PC-3 (cell line): ENCODE measurements at regions of chr11 and their contacts with region 1.

Region 1: DNA sequence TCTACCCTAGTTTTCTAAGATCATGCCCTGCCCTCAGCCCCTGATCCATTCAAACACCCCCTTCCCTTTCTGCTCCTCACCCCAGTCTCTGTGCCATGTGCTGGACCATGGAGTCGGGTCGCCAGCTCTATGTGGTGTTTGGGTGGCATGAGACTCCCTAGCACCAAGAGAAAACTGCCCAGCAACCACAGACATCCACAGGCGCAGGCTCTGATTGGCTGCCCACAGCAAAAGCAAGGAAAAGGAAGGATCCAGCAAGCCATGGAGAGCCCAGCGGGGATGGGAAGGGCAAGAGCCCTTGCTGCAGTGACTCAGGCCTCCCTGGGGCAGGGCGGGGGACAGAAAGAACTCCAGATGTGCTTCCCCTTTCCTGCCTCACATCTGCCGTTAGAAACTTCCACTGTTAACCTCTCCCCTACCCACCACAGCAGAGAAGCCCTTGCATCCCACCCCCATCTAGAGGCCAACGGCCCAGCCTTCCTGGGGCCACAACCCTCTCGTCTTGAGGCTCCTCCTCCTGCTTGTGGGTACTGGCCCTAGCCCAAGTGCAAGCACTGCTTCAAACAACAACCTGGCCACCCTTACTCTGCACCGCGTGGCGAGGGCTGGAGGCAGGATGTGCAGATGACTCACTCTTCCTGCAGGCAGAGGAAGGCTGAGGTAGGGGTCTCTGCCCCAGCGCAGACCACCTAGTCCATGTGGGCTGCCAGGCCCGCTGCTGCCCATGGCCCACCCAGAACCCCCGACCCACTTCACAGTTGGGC is 9.7 kb upstream of the AHNAK start:
- DNase-seq: peak; percentile 98
- ATAC-seq: peak; percentile 39
- H3K4me3 ChIP-seq: peak overlapping the region; percentile 26; the same call in 1 of the 2 replicates
- H3K27ac ChIP-seq: peak overlapping the region; percentile 94
- H3K4me1 ChIP-seq: peaks cover 98% of the 10 kb centered on the region
- H3K27me3 ChIP-seq: no peaks in the 10 kb centered on the region
- CTCF ChIP-seq: no peak

Region 2: GRCh38 chr11:62394825-62395538 is 161.3 kb before region 1 on chr11:
- CTCF ChIA-PET with region 1: interaction called, 35 read pairs
- POLR2A ChIA-PET with region 1: interaction called, 5 read pairs
- intact Hi-C with region 1: loop called (anchors 1 kb)
- DNase-seq: peak; percentile 93
- ATAC-seq: peak; percentile 81
- H3K4me3 ChIP-seq: peak overlapping the region; percentile 64
- H3K27ac ChIP-seq: no peak overlapping the region
- H3K4me1 ChIP-seq: peaks cover 17% of the 10 kb centered on the region
- H3K27me3 ChIP-seq: no peaks in the 10 kb centered on the region
- CTCF ChIP-seq: peak; percentile 96

Region 3: DNA sequence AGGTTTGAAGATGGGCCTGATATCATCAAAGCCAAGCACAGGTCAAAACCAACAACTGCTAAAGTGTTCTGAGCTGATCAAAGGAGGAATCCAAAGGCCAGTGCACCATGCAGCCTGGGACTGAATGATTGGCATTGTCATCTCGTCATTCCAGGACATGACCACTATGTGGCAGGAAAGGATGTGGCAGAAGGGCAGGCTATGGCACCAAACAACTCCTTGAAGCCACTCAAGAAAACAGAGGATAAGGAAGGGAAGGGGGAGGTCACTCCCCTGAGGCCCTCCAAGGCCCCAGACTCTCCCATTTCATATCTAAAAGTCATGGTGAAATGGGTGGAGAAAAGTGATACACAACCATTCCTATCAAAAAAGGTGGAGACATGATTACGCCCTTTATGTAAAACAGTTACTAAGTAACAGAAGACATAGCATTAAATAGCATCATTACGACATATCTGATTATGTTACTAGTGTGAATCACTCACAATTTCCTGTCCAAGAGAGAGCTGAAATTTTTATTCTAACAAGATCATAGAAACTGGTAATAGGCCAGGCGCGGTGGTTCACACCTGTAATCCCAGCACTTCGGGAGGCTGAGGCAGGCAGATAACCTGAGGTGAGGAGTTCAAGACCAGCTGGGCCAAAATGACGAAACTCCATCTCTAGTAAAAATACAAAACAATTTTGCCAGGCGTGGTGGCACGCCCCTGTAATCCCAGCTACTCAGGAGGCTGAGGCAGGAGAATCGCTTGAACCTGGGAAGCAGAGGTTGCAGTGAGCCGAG is 59.0 kb before region 1 on chr11:
- CTCF ChIA-PET with region 1: interaction called, 9 read pairs
- POLR2A ChIA-PET with region 1: no interaction called
- intact Hi-C with region 1: loop called (anchors 1 kb)
- DNase-seq: peak; percentile 87
- ATAC-seq: peak; percentile 85
- H3K4me3 ChIP-seq: no peak overlapping the region
- H3K27ac ChIP-seq: peak overlapping the region; percentile 26
- H3K4me1 ChIP-seq: peaks cover 34% of the 10 kb centered on the region
- H3K27me3 ChIP-seq: no peaks in the 10 kb centered on the region
- CTCF ChIP-seq: peak; percentile 93

Region 4: GRCh38 chr11:62573592-62574362 is 17.5 kb after region 1 on chr11 and contains the start of gene EEF1G:
- CTCF ChIA-PET with region 1: interaction called, 6 read pairs
- POLR2A ChIA-PET with region 1: interaction called, 12 read pairs
- intact Hi-C with region 1: no loop called
- DNase-seq: peak; percentile 100
- ATAC-seq: peak; percentile 87
- H3K4me3 ChIP-seq: peak within 1 kb of the TSS; percentile 94
- H3K27ac ChIP-seq: peak within 1 kb of the TSS; percentile 74
- H3K4me1 ChIP-seq: peaks cover 36% of the 10 kb centered on the region
- H3K27me3 ChIP-seq: no peaks in the 10 kb centered on the region
- CTCF ChIP-seq: no peak
- total RNA-seq, gene EEF1G: 1,577 and 1,815 TPM in 2 replicates

Region 5: DNA sequence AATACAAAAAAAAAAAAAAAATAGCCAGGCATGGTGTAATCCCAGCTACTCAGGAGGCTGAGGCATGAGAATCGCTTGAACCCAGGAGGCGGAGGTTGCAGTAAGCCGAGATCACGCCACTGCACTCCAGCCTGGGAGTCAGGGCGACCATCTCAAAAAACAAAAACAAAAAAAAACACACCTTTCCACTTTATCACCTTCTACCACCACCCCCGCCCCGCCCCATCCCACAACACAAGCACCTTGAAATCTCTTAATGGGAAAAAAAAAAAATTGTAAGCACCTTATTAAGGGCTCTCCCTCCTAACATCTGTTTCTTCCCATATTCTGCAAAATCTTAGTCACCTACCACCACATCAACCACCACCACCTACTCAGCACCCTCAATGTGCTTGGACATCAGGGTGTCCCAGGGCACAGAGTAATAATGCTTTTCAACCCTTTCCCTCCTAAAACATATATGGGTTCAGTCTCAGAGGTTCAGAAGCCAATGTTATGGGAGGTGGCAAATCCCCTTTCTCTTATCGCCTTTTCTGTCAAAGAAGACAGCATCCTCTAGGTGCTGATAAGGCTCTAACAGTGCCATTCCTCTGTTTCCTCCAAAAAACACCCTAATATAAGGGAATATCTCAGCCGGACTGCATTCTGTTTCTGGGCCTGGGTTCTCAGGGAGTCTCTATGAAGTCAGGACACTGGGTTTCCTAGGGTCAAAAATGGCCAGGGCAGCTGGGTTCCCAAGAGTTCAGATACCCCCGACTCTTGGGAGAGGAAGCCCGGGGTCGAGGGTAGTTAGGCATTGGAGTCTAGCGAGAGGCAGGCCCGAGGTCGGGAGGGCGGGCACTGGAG is 96.1 kb after region 1 on chr11:
- CTCF ChIA-PET with region 1: no interaction called
- POLR2A ChIA-PET with region 1: interaction called, 17 read pairs
- intact Hi-C with region 1: no loop called
- DNase-seq: no peak
- ATAC-seq: no peak
- H3K4me3 ChIP-seq: peak overlapping the region; percentile 76
- H3K27ac ChIP-seq: peak overlapping the region; percentile 33
- H3K4me1 ChIP-seq: peaks cover 11% of the 10 kb centered on the region
- H3K27me3 ChIP-seq: no peaks in the 10 kb centered on the region
- CTCF ChIP-seq: no peak

Region 6: DNA sequence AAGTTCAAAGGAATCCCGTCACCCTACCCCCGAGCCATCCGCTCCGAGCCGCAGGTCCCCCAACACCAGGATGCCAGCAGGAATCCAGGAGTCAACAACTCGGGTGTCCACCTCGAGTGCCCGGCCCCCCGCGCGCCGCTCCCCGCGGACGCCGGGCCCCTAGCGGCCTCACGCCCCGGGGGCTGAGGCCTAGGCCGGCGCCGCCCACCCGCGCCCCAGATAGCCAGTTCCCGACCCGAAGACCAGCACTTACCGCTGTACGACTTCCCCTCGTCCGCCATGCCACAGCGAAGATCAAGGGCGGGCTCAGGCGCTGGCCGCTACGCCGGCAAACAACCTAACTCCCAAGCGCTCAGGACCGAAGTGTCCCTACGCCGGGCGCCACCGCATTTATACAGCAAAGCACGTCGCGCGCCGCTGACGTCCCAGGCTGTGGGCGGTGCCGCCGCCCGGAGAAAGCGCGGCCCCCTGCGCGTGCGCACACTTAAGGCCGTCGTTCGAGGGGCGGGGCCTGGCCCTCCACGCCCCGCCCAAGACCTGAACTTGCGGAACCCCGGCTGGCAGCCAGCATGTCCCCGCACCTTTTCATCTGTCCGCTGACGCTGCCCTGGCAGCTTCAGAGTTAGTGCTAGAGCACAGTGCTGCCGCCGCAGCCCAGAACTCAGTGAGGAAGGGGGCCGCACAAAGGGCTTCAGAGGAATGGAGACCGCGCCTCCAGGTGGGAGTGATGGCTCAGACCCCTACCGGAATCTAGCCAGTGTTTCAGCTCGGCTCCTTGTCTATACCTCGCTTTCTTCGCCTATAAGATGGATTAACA is 249.0 kb after region 1 on chr11 and contains the start of gene NXF1:
- CTCF ChIA-PET with region 1: no interaction called
- POLR2A ChIA-PET with region 1: no interaction called
- intact Hi-C with region 1: no loop called
- DNase-seq: peak; percentile 99
- ATAC-seq: peak; percentile 86
- H3K4me3 ChIP-seq: peak within 1 kb of the TSS; percentile 93
- H3K27ac ChIP-seq: no peak within 1 kb of the TSS
- H3K4me1 ChIP-seq: peaks cover 17% of the 10 kb centered on the region
- H3K27me3 ChIP-seq: no peaks in the 10 kb centered on the region
- CTCF ChIP-seq: 0 out of 2 replicates have a peak, but pooled peaks have one; percentile 16
- total RNA-seq, gene NXF1: 33.1 and 33.2 TPM in 2 replicates